ENCODE measurements at regions of chr4 and their contacts with region 1.

Region 1: GRCh38 chr4:38132107-38132673 is 172.0 kb downstream of the PTTG2 start:
- DNase-seq: peak; percentile 89
- H3K4me3 Mint-ChIP-seq: no peak overlapping the region
- H3K27ac Mint-ChIP-seq: peak overlapping the region; percentile 94
- H3K4me1 Mint-ChIP-seq: peaks cover 62% of the 10 kb centered on the region
- H3K27me3 Mint-ChIP-seq: no peaks in the 10 kb centered on the region

Region 2: GRCh38 chr4:36325499-36325898 is 1806.7 kb before region 1 on chr4:
- CTCF ChIA-PET with region 1: no interaction called
- intact Hi-C with region 1: loop called (anchors 1 kb)
- DNase-seq: peak; percentile 25
- H3K4me3 Mint-ChIP-seq: no peak overlapping the region
- H3K27ac Mint-ChIP-seq: peak overlapping the region; percentile 52
- H3K4me1 Mint-ChIP-seq: peaks cover 62% of the 10 kb centered on the region
- H3K27me3 Mint-ChIP-seq: no peaks in the 10 kb centered on the region

Region 3: DNA sequence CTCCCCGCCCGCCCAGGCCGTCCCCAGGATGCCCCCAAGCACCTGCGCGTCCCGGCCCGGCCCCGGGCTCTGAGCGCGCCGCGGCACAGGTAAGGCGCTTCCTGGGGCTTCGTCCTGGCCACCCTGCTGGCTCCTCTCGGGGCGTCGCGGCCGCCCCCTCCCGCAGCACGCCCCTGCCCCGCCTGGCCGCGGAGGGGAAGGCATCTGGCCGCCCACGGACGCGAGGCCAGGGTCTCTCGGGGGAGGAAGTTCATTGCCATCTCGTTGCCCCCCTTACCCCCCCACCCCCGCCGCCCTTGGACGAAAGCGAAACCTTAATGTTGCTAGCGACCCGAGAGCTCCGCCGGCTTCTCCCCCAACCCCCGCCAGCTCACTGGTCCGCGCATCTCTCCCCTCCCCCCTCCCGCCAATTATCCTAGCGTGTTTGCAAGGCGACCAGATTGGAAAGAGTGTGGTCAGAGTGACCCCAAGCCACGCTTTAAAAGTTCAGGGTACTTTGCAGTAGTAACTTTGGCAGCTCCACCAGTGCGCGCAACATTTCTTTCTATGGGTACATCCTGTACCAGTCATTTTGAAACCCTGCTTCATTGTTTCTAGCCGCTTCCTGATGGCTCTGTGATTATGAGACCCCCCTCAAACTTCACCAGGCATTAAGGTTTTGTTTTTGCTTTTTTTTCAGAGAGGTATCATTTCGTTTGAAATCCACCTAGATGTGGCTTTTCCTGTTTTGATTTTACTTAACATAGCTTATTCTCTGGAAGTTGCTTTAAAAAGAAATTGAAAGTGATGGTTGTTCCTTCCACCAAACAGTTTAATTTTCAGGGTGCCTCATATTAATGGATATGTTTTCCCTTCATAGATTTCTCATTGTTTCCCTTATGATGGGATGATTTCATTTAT is 240.7 kb before region 1 on chr4:
- CTCF ChIA-PET with region 1: no interaction called
- intact Hi-C with region 1: loop called (anchors 1 kb)
- DNase-seq: peak; percentile 74
- H3K4me3 Mint-ChIP-seq: peak overlapping the region; percentile 89
- H3K27ac Mint-ChIP-seq: peak overlapping the region; percentile 86
- H3K4me1 Mint-ChIP-seq: peaks cover 37% of the 10 kb centered on the region
- H3K27me3 Mint-ChIP-seq: peaks cover 8% of the 10 kb centered on the region

Region 4: GRCh38 chr4:38160487-38161207 is 28.5 kb after region 1 on chr4:
- CTCF ChIA-PET with region 1: interaction called, 5 read pairs
- intact Hi-C with region 1: loop called (anchors 1 kb)
- DNase-seq: peak; percentile 72
- H3K4me3 Mint-ChIP-seq: no peak overlapping the region
- H3K27ac Mint-ChIP-seq: no peak overlapping the region
- H3K4me1 Mint-ChIP-seq: peaks cover 73% of the 10 kb centered on the region
- H3K27me3 Mint-ChIP-seq: no peaks in the 10 kb centered on the region

Region 5: GRCh38 chr4:38514465-38515146 is 382.4 kb after region 1 on chr4:
- CTCF ChIA-PET with region 1: interaction called, 3 read pairs
- intact Hi-C with region 1: loop called (anchors 5 kb)
- DNase-seq: peak; percentile 59
- H3K4me3 Mint-ChIP-seq: no peak overlapping the region
- H3K27ac Mint-ChIP-seq: peak overlapping the region; percentile 18
- H3K4me1 Mint-ChIP-seq: peaks cover 73% of the 10 kb centered on the region
- H3K27me3 Mint-ChIP-seq: no peaks in the 10 kb centered on the region

Region 6: GRCh38 chr4:38856524-38857337 is 724.5 kb after region 1 on chr4 and contains the start of gene TLR6:
- CTCF ChIA-PET with region 1: no interaction called
- intact Hi-C with region 1: loop called (anchors 2 kb)
- DNase-seq: peak; percentile 86
- H3K4me3 Mint-ChIP-seq: peak within 1 kb of the TSS; percentile 66
- H3K27ac Mint-ChIP-seq: peak within 1 kb of the TSS; percentile 84
- H3K4me1 Mint-ChIP-seq: peaks cover 35% of the 10 kb centered on the region
- H3K27me3 Mint-ChIP-seq: no peaks in the 10 kb centered on the region
- total RNA-seq, gene TLR6: 3.6 TPM

Measured in activated naive CD4-positive, alpha-beta T cell treated with anti-CD3 and anti-CD28 coated beads for 36 hours (primary cell).